ENCODE measurements at regions of chr21 and their contacts with region 1.

Region 1: DNA sequence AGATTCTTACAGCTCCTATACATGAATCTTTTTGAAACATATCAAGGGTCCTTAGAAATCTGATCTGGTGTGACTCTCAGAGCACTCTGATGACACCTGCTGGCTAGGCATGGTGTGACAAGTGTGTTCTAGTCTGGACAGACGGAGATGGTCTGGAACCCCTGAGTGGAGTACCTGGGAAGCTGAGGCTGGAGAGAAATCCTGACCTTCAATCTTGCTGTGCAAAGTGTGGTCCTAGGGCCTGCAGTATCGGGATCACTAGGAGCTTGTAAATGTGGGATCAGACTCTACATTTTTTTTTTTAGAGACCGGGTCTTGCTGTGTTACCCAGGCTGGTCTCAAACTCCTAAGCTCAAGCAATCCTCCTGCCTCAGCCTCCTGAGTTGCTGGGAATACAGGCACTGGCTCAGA is 78.6 kb upstream of the SOD1 start:
- DNase-seq: peak; percentile 66
- H3K4me3 Mint-ChIP-seq: no peak overlapping the region
- H3K27ac Mint-ChIP-seq: no peak overlapping the region
- H3K4me1 Mint-ChIP-seq: no peaks in the 10 kb centered on the region
- H3K27me3 Mint-ChIP-seq: no peaks in the 10 kb centered on the region
- CTCF ChIP-seq: peak; percentile 48

Region 2: DNA sequence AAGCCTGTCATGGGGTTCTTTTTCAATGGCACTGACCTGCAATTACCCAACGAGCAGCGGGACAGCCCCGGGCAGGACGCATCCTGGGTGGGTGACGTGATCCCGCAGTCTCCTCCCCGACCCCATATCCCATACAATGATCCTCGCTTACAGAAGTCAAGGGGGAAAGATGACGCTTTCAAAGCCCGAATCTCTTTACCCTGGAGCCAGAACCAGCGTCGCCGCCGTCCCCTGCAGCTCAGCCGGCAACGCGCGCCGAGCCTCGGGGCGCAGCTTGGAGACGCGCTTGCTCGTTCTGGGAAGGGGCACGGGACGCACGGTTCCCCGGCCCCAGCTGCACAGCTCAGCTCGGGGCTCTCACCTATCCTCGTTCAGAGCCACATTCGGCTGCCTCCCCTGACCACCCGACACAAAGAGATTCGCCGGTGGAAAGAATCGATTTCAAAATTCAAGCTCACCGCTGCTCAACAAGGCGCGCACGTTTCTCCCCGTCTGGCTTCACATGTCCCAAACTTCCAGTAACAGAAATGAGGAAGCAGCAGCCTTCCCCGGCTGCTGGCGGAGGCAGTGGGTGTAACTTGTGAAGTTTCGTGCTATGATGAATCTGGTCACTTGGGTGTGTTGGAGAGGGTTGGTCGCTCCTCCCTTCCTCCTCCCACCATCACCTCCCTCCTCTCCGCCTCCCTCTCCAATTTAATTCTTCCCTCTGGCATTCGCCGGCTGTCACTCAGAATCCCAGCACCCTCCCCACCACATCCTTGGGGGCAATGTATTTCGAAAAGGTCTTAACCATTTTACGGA is 237.0 kb before region 1 on chr21 and contains the start of gene TIAM1:
- CTCF ChIA-PET with region 1: no interaction called
- intact Hi-C with region 1: loop called (anchors 10 kb)
- DNase-seq: peak; percentile 31
- H3K4me3 Mint-ChIP-seq: peak within 1 kb of the TSS; percentile 98
- H3K27ac Mint-ChIP-seq: peak within 1 kb of the TSS; percentile 64
- H3K4me1 Mint-ChIP-seq: peaks cover 20% of the 10 kb centered on the region
- H3K27me3 Mint-ChIP-seq: no peaks in the 10 kb centered on the region
- CTCF ChIP-seq: no peak
- total RNA-seq, gene TIAM1: 15.2 and 18.2 TPM in 2 replicates

Region 3: DNA sequence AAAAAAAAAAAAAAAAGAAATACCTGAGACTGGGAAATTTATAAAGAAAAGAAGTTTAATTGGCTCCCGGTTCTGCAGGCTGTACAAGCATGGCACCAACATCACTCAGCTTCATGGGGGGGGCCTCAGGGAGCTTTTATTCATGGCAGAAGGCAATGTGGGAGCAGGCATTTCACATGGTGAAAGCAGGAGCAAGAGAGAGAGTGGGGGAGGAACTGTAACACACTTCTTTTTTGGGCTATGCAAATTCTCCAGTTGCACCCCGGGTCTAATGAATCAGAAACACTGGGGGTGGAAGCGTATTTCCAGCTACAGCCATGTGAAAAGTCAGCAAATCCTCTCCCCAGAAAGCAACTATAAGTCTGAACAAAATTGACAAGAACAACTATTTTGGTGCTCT is 66.8 kb after region 1 on chr21:
- CTCF ChIA-PET with region 1: no interaction called
- intact Hi-C with region 1: no loop called
- DNase-seq: no peak
- H3K4me3 Mint-ChIP-seq: no peak overlapping the region
- H3K27ac Mint-ChIP-seq: no peak overlapping the region
- H3K4me1 Mint-ChIP-seq: peaks cover 9% of the 10 kb centered on the region
- H3K27me3 Mint-ChIP-seq: no peaks in the 10 kb centered on the region
- CTCF ChIP-seq: no peak